Activated CD4-positive, alpha-beta T cell treated with anti-CD3 and anti-CD28 coated beads for 36 hours (primary cell): ENCODE measurements at regions of chr17 and their contacts with region 1.

Region 1: DNA sequence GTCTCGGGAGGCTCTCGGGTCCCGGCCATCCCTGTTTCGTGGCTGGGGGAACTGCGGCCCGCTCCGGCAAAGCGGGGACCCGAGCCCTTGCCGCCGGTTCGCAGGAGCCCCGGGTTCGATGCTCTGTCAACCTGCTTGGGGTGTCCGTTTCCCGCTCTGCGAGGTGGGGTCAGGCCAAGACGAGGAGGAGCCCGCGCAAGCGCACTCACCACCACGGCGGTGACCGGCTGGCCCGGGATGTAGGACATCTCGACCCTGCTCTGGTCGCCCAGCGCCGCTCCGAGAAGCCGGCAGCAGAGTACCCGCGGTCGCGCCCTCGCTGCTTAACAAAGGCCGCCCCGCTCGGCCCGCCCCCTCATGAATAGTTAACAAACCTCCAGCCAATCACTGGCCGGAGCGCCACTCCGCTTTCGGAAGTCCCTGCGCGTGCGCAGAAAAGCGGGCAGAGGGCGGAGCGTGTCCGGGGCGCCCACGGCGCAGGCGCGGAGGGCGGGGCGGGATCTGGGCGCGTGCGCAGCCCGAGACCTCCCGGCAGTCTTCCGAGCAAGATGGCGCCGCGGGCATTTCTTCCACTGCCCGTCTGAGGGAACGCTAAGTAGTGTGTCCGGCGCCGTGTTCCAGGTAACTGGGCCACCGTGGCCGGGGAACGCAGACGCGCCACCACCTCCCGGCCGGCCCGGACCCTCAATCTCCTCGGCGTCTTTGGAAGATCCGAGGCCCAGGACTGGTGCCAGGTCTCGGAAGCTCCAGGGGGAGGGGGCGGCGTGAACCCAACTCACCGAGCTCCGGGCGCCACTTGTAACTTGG is at the starts of genes EMC6 and TAX1BP3:
- DNase-seq: peak; percentile 99
- ATAC-seq: peak; percentile 94
- H3K4me3 Mint-ChIP-seq: peak within 1 kb of the TSS; percentile 97
- H3K27ac Mint-ChIP-seq: peak within 1 kb of the TSS; percentile 94
- H3K4me1 Mint-ChIP-seq: peaks cover 21% of the 10 kb centered on the region
- H3K27me3 Mint-ChIP-seq: no peaks in the 10 kb centered on the region
- total RNA-seq, gene EMC6: 43.6 to 44.3 TPM
- total RNA-seq, gene TAX1BP3: 12.0 to 14.6 TPM

Region 2: DNA sequence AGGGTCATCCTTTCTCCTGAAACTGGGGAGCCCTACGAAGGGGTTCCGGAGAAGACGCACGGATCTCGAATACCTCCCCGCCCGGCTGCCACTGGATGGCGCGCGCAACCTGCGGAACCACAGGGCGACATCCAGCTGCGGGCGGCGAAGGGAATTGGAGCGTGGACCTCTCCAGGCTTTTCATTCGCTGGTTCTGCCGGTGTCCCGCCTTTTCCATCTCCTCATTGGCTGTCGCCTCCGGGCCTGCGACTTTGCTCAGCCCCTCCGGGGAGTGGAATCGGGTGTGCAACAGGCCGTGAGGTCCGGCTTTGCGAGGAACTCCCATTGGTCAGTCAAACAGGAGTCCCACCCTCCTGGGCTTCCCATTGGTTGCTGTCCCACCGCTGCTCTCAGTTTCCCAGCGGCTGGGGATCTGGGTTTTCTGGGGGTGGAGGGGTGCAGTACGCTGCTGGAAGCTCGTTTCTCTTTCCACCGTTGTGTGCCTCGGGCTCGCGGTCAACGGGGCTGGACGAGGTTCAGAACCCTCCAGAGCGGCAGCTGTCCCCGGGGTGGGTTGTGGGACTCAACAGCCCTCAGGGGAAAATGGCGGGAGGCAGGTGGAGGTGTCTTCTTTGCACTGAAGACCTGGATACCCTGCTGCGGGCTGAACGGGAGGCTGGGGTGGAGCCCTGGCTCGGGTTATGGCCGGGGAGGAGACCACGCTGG is 619.6 kb before region 1 on chr17:
- CTCF ChIA-PET with region 1: no interaction called
- POLR2A ChIA-PET with region 1: no interaction called
- intact Hi-C with region 1: loop called in 1 of 2 experiments (anchors 1 kb)
- DNase-seq: peak; percentile 98
- ATAC-seq: peak; percentile 99
- H3K4me3 Mint-ChIP-seq: peak overlapping the region; percentile 86
- H3K27ac Mint-ChIP-seq: peak overlapping the region; percentile 83
- H3K4me1 Mint-ChIP-seq: peaks cover 4% of the 10 kb centered on the region
- H3K27me3 Mint-ChIP-seq: no peaks in the 10 kb centered on the region

Region 3: DNA sequence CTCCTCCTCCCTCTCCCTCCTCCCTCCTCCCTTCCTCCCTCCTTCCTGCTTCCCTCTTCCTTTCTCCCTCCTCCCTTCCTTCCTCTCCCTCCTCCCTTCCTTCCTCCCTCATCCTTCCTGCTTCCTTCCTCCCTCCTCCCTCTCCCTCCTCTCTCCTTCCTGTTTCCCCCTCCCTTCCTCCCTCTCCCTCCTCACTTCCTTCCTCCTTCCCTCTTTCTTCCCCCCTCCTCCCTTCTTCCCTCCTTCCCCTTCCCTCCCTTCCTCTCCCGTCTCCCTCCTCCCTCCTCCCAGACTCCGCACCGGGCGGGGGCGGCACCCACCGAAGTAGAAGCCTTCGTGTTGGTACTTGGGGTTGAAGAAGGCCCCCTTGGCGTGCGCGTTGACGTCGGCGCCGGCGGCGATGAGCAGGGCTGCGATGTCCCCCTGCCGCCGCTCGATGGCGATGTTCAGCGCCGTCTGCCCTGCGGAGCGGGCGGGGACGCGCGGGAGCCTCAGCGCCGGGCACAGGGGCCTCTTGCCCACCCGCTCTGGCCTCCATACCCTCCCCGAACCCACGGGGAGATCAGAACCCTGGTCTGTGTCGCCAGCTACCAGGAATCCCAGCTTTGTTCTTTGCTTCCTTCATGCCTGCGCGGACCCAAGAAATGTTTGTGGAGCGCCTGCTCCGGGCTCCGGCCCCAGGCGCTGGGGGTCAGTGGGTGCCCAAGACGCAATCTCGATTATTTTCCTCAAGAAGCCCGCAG is 133.1 kb before region 1 on chr17:
- CTCF ChIA-PET with region 1: no interaction called
- POLR2A ChIA-PET with region 1: no interaction called
- intact Hi-C with region 1: loop called in 1 of 2 experiments (anchors 1 kb)
- DNase-seq: peak; percentile 84
- ATAC-seq: peak; percentile 96
- H3K4me3 Mint-ChIP-seq: peak overlapping the region; percentile 21
- H3K27ac Mint-ChIP-seq: no peak overlapping the region
- H3K4me1 Mint-ChIP-seq: peaks cover 5% of the 10 kb centered on the region
- H3K27me3 Mint-ChIP-seq: peaks cover 3% of the 10 kb centered on the region

Region 4: GRCh38 chr17:3683054-3683511 is 14.6 kb after region 1 on chr17:
- CTCF ChIA-PET with region 1: no interaction called
- POLR2A ChIA-PET with region 1: no interaction called
- intact Hi-C with region 1: no loop called
- DNase-seq: peak; percentile 76
- ATAC-seq: peak; percentile 96
- H3K4me3 Mint-ChIP-seq: no peak overlapping the region
- H3K27ac Mint-ChIP-seq: peak overlapping the region; percentile 39
- H3K4me1 Mint-ChIP-seq: peaks cover 10% of the 10 kb centered on the region
- H3K27me3 Mint-ChIP-seq: no peaks in the 10 kb centered on the region

Region 5: DNA sequence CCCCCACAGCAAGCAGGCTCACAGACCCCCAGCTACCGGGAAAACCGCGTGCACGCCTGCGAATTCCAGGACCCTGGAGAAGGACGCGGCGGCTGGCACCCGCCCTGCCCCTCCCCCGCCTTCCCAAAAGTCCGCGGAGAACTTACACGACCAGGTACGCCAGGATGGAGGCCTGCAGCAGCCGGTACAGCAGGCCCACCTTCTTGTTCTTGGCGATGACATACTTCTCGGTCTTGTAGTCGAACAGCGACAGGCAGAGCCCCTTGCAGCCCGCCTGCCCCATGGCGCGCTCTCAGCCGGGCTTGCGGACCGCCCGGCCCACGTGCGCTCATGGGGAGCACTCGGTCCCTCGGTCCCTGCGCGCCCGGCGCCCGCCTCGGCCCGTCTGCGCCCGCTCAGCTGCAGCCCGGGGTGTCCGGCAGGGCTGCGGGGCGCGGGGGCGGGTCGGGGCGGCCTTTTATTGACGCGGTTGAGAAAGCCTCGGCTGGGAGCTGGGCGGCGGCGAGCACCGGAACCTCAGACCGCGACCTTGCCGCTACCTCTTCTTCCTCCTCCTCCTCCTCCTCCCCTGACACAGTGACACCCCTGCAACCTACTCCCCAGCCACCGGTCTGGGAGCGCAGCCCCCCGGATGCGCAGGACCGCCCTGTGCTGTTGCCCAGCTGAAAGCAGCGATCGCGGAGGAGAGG is 27.4 kb after region 1 on chr17 and contains the start of gene P2RX5:
- CTCF ChIA-PET with region 1: interaction called, 4 read pairs
- POLR2A ChIA-PET with region 1: interaction called, 9 read pairs
- intact Hi-C with region 1: loop called in 1 of 2 experiments (anchors 1 kb)
- DNase-seq: peak; percentile 67
- ATAC-seq: peak; percentile 48
- H3K4me3 Mint-ChIP-seq: peak within 1 kb of the TSS; percentile 81
- H3K27ac Mint-ChIP-seq: peak within 1 kb of the TSS; percentile 94
- H3K4me1 Mint-ChIP-seq: peaks cover 15% of the 10 kb centered on the region
- H3K27me3 Mint-ChIP-seq: no peaks in the 10 kb centered on the region
- total RNA-seq, gene P2RX5: 69.7 to 77.5 TPM

Region 6: GRCh38 chr17:3710951-3711383 is 42.5 kb after region 1 on chr17:
- CTCF ChIA-PET with region 1: no interaction called
- POLR2A ChIA-PET with region 1: interaction called, 5 read pairs
- intact Hi-C with region 1: loop called in 1 of 2 experiments (anchors 1 kb)
- DNase-seq: peak; percentile 82
- ATAC-seq: peak; percentile 98
- H3K4me3 Mint-ChIP-seq: peak overlapping the region; percentile 55
- H3K27ac Mint-ChIP-seq: peak overlapping the region; percentile 83
- H3K4me1 Mint-ChIP-seq: peaks cover 55% of the 10 kb centered on the region
- H3K27me3 Mint-ChIP-seq: no peaks in the 10 kb centered on the region

Region 7: GRCh38 chr17:3777366-3778120 is 109.1 kb after region 1 on chr17:
- CTCF ChIA-PET with region 1: no interaction called
- POLR2A ChIA-PET with region 1: no interaction called
- intact Hi-C with region 1: no loop called
- DNase-seq: no peak
- ATAC-seq: no peak
- H3K4me3 Mint-ChIP-seq: no peak overlapping the region
- H3K27ac Mint-ChIP-seq: no peak overlapping the region
- H3K4me1 Mint-ChIP-seq: no peaks in the 10 kb centered on the region
- H3K27me3 Mint-ChIP-seq: no peaks in the 10 kb centered on the region

Region 8: GRCh38 chr17:3893003-3893719 is 224.7 kb after region 1 on chr17 and contains the start of gene CAMKK1:
- CTCF ChIA-PET with region 1: no interaction called
- POLR2A ChIA-PET with region 1: no interaction called
- intact Hi-C with region 1: loop called in 1 of 2 experiments (anchors 1 kb)
- DNase-seq: peak; percentile 94
- ATAC-seq: peak; percentile 88
- H3K4me3 Mint-ChIP-seq: peak within 1 kb of the TSS; percentile 76
- H3K27ac Mint-ChIP-seq: peak within 1 kb of the TSS; percentile 77
- H3K4me1 Mint-ChIP-seq: peaks cover 36% of the 10 kb centered on the region
- H3K27me3 Mint-ChIP-seq: no peaks in the 10 kb centered on the region
- total RNA-seq, gene CAMKK1: 4.5 to 5.4 TPM